Activated naive CD4-positive, alpha-beta T cell treated with anti-CD3 and anti-CD28 coated beads, Interleukin-2, amount 10 ng/mL, durations not matched to agents 7 days and 5 days (primary cell): ENCODE measurements at regions of chr19 and their contacts with region 1.

Region 1: GRCh38 chr19:28633319-28634018 is 579.5 kb downstream of the UQCRFS1 start:
- DNase-seq: peak; percentile 56
- H3K4me3 Mint-ChIP-seq: no peak overlapping the region
- H3K27ac Mint-ChIP-seq: no peak overlapping the region
- H3K4me1 Mint-ChIP-seq: no peaks in the 10 kb centered on the region
- H3K27me3 Mint-ChIP-seq: no peaks in the 10 kb centered on the region

Region 2: GRCh38 chr19:28468701-28469459 is 164.6 kb before region 1 on chr19:
- CTCF ChIA-PET with region 1: interaction called, 25 read pairs
- DNase-seq: peak; percentile 30
- H3K4me3 Mint-ChIP-seq: no peak overlapping the region
- H3K27ac Mint-ChIP-seq: peak overlapping the region; percentile 55
- H3K4me1 Mint-ChIP-seq: peaks cover 11% of the 10 kb centered on the region
- H3K27me3 Mint-ChIP-seq: peaks cover 10% of the 10 kb centered on the region

Region 3: DNA sequence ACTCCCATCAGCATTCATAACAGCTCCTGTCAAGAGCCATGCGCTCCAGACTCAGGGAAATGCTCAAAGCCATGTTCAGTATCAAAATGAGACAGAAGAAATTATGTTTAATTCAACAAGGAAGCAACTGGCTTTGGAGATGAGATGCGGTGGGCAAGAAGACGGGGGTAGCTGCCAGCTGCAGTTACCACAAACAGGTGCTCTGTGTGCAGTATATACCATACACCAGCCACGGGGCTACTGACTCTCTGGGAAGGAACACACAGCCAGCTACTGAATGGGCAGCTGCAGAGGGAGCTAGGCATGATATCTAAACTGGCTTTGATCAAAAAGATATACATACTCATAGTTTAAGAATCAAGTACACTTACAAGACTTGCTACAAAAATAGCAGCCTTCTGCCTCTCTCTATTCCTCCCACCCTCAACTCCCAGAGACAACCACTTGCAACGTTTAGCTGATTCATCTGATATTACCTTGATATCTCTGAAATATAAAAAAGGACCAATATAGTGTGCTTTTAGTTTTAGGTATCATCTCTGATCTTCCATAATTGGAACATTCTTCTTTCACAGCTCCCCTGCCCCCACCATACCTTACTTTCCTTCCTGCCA is 13.5 kb before region 1 on chr19:
- CTCF ChIA-PET with region 1: interaction called, 18 read pairs
- DNase-seq: no peak
- H3K4me3 Mint-ChIP-seq: no peak overlapping the region
- H3K27ac Mint-ChIP-seq: no peak overlapping the region
- H3K4me1 Mint-ChIP-seq: no peaks in the 10 kb centered on the region
- H3K27me3 Mint-ChIP-seq: no peaks in the 10 kb centered on the region

Region 4: GRCh38 chr19:28705008-28705407 is 71.5 kb after region 1 on chr19:
- CTCF ChIA-PET with region 1: no interaction called
- DNase-seq: no peak
- H3K4me3 Mint-ChIP-seq: no peak overlapping the region
- H3K27ac Mint-ChIP-seq: no peak overlapping the region
- H3K4me1 Mint-ChIP-seq: no peaks in the 10 kb centered on the region
- H3K27me3 Mint-ChIP-seq: no peaks in the 10 kb centered on the region

Region 5: GRCh38 chr19:28887920-28888618 is 254.6 kb after region 1 on chr19:
- CTCF ChIA-PET with region 1: no interaction called
- DNase-seq: no peak
- H3K4me3 Mint-ChIP-seq: no peak overlapping the region
- H3K27ac Mint-ChIP-seq: no peak overlapping the region
- H3K4me1 Mint-ChIP-seq: no peaks in the 10 kb centered on the region
- H3K27me3 Mint-ChIP-seq: no peaks in the 10 kb centered on the region